Ascending aorta (tissue), 2 donors: ENCODE measurements at regions of chr9 and their contacts with region 1.

Region 1: GRCh38 chr9:104374711-104375110 is 129.4 kb upstream of the OR13F1 start:
- DNase-seq: no peak
- H3K4me3 ChIP-seq: no peak overlapping the region
- H3K27ac ChIP-seq: no peak overlapping the region
- H3K4me1 ChIP-seq: no peaks in the 10 kb centered on the region
- H3K27me3 ChIP-seq: no peaks in the 10 kb centered on the region
- CTCF ChIP-seq: no peak

Region 2: GRCh38 chr9:103721056-103721455 is 653.7 kb before region 1 on chr9:
- intact Hi-C with region 1: no loop called
- DNase-seq: no peak
- H3K4me3 ChIP-seq: no peak overlapping the region
- H3K27ac ChIP-seq: no peak overlapping the region
- H3K4me1 ChIP-seq: no peaks in the 10 kb centered on the region
- H3K27me3 ChIP-seq: no peaks in the 10 kb centered on the region
- CTCF ChIP-seq: no peak

Region 3: GRCh38 chr9:104412238-104412637 is 37.5 kb after region 1 on chr9:
- intact Hi-C with region 1: no loop called
- DNase-seq: no peak
- H3K4me3 ChIP-seq: no peak overlapping the region
- H3K27ac ChIP-seq: peak overlapping the region in 1 of 2 donors; percentile 36
- H3K4me1 ChIP-seq: peaks cover 0 to 3% of the 10 kb centered on the region in 2 donors
- H3K27me3 ChIP-seq: no peaks in the 10 kb centered on the region
- CTCF ChIP-seq: no peak

Region 4: DNA sequence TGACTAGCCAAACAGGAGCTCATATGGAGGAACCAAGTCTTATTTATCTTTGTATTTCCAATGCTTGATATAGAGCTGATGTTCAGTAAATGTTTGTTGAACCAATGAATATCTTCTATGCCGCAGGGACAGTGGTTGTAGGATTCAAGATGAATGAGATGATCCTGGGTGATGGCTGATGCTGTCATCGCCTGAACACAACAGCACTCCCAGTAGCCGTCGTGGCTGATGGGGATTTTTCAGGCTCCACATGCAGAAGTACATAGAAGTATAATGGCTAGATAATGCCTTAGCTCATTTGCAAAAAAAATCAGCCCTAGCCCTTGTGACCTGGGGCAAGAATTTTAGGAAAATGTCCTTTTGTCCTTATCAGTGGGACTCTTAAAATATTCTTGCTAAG is 60.3 kb after region 1 on chr9:
- intact Hi-C with region 1: loop called (anchors 10 kb)
- DNase-seq: no peak
- H3K4me3 ChIP-seq: no peak overlapping the region
- H3K27ac ChIP-seq: no peak overlapping the region
- H3K4me1 ChIP-seq: no peaks in the 10 kb centered on the region
- H3K27me3 ChIP-seq: no peaks in the 10 kb centered on the region
- CTCF ChIP-seq: no peak